WTC11 (cell line): ENCODE measurements at regions of chr17 and their contacts with region 1.

Region 1: GRCh38 chr17:35448214-35448898 is at the start of gene SLFN13:
- DNase-seq: peak; percentile 85
- ATAC-seq: peak; percentile 94
- H3K4me3 Mint-ChIP-seq: peak within 1 kb of the TSS; percentile 79
- H3K27ac Mint-ChIP-seq: peak within 1 kb of the TSS; percentile 52; the same call in 1 of the 2 replicates
- H3K4me1 Mint-ChIP-seq: peaks cover 26% of the 10 kb centered on the region
- H3K27me3 Mint-ChIP-seq: peaks cover 99% of the 10 kb centered on the region
- CTCF ChIP-seq: no peak
- total RNA-seq, gene SLFN13: 19.7 to 22.1 TPM (median 20.8 TPM) in 3 replicates

Region 2: GRCh38 chr17:35432176-35433074 is 15.9 kb before region 1 on chr17 and contains the start of gene SLFN12:
- CTCF ChIA-PET with region 1: interaction called, 13 read pairs
- POLR2A ChIA-PET with region 1: interaction called, 32 read pairs
- DNase-seq: peak; percentile 40
- ATAC-seq: peak; percentile 58
- H3K4me3 Mint-ChIP-seq: peak within 1 kb of the TSS; percentile 91
- H3K27ac Mint-ChIP-seq: peak within 1 kb of the TSS; percentile 98
- H3K4me1 Mint-ChIP-seq: peaks cover 78% of the 10 kb centered on the region
- H3K27me3 Mint-ChIP-seq: peaks cover 86% of the 10 kb centered on the region
- CTCF ChIP-seq: no peak
- total RNA-seq, gene SLFN12: 12.2 to 12.7 TPM (median 12.4 TPM) in 3 replicates

Region 3: DNA sequence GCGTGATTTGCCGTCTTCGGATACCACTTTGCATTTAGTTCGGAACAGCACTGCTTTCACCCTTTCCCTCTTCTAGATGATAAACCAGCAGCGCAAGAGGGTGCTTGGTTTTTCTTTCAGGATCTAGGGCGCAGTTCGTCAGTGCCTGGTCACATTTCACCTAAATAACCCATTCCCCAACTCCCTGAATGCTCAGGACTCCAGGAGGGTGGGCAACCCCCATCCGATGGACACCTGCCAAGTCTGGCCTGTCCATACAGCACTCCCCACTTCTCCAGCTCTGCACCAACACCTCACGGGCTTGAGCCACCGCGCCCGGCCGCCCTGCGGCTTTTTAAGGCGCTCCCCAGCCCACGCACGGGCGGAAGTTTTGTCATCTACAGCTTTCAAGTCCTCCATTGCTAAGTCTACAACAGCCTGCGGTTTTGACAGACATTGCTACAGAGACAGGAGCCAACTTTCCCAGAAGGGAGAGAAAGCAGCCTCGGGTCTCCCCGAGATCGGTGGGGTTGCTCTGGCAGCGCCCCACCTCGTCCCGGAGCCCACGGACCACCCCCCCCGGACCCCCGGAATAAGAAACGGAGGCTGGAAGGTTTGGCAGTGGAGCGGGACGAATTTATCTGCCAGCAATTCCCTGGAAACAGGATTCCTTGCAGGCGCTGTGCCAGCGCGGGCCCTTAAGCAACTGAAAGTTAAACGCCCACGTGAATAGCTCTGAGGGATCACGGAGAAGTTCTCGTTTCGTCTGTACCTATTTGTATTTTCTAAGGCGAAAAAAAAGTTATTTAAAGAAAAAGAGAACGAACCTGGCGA is 38.8 kb after region 1 on chr17:
- CTCF ChIA-PET with region 1: interaction called, 14 read pairs
- POLR2A ChIA-PET with region 1: interaction called, 5 read pairs
- DNase-seq: no peak
- ATAC-seq: no peak
- H3K4me3 Mint-ChIP-seq: peak overlapping the region; percentile 64
- H3K27ac Mint-ChIP-seq: no peak overlapping the region
- H3K4me1 Mint-ChIP-seq: peaks cover 39% of the 10 kb centered on the region
- H3K27me3 Mint-ChIP-seq: peaks cover 100% of the 10 kb centered on the region
- CTCF ChIP-seq: no peak